ENCODE measurements at regions of chrX and their contacts with region 1.

Region 1: GRCh38 chrX:54439967-54440871 is at the start of gene TSR2:
- DNase-seq: peak; percentile 93
- H3K4me3 Mint-ChIP-seq: peak within 1 kb of the TSS; percentile 96
- H3K27ac Mint-ChIP-seq: peak within 1 kb of the TSS; percentile 92
- H3K4me1 Mint-ChIP-seq: peaks cover 14% of the 10 kb centered on the region
- H3K27me3 Mint-ChIP-seq: no peaks in the 10 kb centered on the region
- total RNA-seq, gene TSR2: 40.8 and 43.7 TPM in 2 replicates

Region 2: DNA sequence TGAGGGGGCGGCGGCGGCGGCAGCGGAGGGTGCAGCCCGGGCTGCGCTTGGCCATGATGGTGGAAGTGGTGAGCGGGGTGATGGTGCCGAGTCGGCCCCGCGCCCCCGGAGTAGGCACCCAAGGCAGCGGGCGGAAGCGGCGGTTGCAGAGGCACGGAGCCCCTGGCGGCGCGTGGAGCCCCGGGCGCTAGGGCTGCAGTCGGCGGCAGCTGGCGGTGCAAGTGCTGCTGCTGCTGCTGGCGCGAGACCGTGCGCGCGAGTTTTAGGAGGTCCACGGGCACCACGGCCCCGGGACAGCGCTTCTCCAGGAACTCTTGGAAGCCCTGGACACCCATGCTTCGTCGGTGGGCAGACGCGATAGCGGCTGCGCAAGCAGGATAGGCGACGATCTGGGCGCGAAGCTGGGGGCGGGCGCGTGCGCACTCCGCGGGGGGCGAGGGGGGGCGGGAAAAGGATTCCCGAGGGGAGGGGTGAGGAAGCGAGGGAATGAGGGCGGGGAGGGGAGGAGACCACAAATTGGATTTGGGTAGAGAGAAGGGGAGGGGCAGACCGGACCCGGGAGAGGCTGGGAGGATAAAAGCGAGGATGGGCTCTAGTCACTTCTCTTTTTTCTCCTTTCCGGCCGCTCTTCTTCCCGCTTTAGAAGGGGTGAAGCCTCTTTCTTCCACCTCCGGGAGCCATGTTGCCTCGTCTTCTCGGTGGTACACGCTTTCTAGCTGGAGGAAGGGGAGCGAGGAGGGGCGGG is 257.2 kb before region 1 on chrX and contains the start of gene FAM120C:
- intact Hi-C with region 1: loop called (anchors 1 kb)
- DNase-seq: peak; percentile 84
- H3K4me3 Mint-ChIP-seq: peak within 1 kb of the TSS; percentile 88
- H3K27ac Mint-ChIP-seq: peak within 1 kb of the TSS; percentile 92
- H3K4me1 Mint-ChIP-seq: peaks cover 37% of the 10 kb centered on the region
- H3K27me3 Mint-ChIP-seq: no peaks in the 10 kb centered on the region
- total RNA-seq, gene FAM120C: 10.8 and 11.4 TPM in 2 replicates

Region 3: DNA sequence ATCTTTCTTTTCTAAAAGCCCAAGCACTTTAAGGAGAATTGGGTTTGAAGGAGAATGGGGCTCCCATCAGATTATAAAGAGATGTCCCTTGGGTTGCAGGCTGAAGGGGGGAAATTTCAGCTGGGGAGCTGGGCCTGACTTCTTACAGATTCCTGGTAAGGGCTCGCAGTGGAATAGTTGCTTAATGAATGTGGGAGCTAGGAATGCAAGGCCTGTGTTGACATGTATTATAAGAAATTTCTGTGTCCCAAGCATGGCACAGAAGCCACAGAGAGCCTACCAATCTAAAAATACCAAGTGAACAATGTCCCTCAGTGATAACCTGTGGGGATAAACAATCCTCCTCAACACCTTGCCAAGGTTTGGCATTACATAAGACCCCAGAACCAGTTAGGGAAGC is 43.1 kb before region 1 on chrX:
- intact Hi-C with region 1: no loop called
- DNase-seq: no peak
- H3K4me3 Mint-ChIP-seq: no peak overlapping the region
- H3K27ac Mint-ChIP-seq: no peak overlapping the region
- H3K4me1 Mint-ChIP-seq: no peaks in the 10 kb centered on the region
- H3K27me3 Mint-ChIP-seq: no peaks in the 10 kb centered on the region

Region 4: GRCh38 chrX:54479136-54480111 is 39.2 kb after region 1 on chrX:
- intact Hi-C with region 1: no loop called
- DNase-seq: no peak
- H3K4me3 Mint-ChIP-seq: no peak overlapping the region
- H3K27ac Mint-ChIP-seq: no peak overlapping the region
- H3K4me1 Mint-ChIP-seq: no peaks in the 10 kb centered on the region
- H3K27me3 Mint-ChIP-seq: no peaks in the 10 kb centered on the region